ENCODE measurements at regions of chr6 and their contacts with region 1.

Region 1: DNA sequence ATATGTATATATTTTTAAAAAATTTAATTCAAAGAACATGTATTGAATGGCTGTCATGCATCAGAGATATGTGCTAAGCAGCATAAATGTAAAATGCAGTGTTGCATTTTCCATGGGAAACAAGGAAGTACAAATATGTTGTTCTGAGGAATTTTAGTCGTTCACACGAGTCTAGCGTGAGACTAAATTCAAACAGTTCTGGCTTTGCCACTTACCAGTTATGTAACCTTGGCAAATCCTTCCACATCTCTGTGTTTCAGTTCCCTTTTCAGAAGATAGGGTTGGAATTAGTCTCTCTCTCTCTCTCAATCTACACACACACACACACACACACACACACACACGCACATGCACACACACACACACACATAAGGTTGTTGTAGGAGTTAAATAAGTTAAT is 305.4 kb downstream of the UTRN start:
- DNase-seq: no peak
- H3K4me3 ChIP-seq: no peak overlapping the region
- H3K27ac ChIP-seq: no peak overlapping the region
- H3K4me1 ChIP-seq: peaks cover 48% of the 10 kb centered on the region
- H3K27me3 ChIP-seq: no peaks in the 10 kb centered on the region
- CTCF ChIP-seq: no peak

Region 2: DNA sequence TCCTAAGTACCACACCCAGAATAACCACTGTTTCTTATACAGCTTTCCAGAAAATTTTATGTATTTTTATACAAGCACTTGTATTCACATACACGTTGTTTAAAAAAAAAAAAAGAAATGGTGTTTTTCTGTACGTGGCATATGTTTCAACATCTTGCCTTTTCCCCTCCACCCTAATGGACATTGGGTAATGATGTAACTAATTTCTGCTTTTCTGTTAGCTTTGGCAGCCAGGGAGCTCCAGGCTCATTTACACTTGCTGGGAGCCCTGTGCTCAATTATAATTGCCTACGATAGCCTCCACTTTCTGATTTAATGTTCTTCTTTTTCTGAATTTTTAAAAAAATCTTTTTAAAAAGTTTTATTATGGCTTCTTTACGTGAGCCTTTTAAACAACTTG is 47.0 kb after region 1 on chr6:
- CTCF ChIA-PET with region 1: no interaction called
- POLR2A ChIA-PET with region 1: no interaction called
- intact Hi-C with region 1: no loop called
- DNase-seq: no peak
- H3K4me3 ChIP-seq: no peak overlapping the region
- H3K27ac ChIP-seq: no peak overlapping the region
- H3K4me1 ChIP-seq: no peaks in the 10 kb centered on the region
- H3K27me3 ChIP-seq: no peaks in the 10 kb centered on the region
- CTCF ChIP-seq: no peak

Region 3: DNA sequence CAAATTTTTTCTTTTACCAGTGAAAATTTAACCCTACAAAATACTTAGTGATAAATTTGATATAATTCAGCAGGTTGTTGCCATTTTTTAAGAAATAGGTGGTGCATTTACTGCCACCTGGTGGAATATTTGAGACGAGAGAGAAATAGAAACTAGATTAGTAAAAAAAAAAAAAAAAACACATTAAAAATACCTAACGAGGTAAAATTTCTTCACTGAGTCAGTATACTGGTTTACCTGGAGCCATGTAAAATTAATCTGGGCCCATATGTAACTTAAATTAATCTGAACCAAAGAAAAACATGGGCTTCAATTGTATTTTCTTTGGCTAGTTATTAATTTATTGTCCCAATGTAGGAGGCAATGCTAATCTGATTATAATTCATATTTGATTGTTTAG is 624.0 kb after region 1 on chr6:
- CTCF ChIA-PET with region 1: interaction called, 5 read pairs
- POLR2A ChIA-PET with region 1: no interaction called
- intact Hi-C with region 1: loop called (anchors 1 kb)
- DNase-seq: peak; percentile 72
- H3K4me3 ChIP-seq: no peak overlapping the region
- H3K27ac ChIP-seq: peak overlapping the region; percentile 60
- H3K4me1 ChIP-seq: peaks cover 17% of the 10 kb centered on the region
- H3K27me3 ChIP-seq: no peaks in the 10 kb centered on the region
- CTCF ChIP-seq: peak; percentile 78

Measured in A673 (cell line).